ENCODE measurements at regions of chr5 and their contacts with region 1.

Region 1: GRCh38 chr5:31516802-31517201 is 15.1 kb downstream of the DROSHA start:
- DNase-seq: no peak
- H3K4me3 Mint-ChIP-seq: no peak overlapping the region
- H3K27ac Mint-ChIP-seq: no peak overlapping the region
- H3K4me1 Mint-ChIP-seq: peaks cover 6% of the 10 kb centered on the region
- H3K27me3 Mint-ChIP-seq: no peaks in the 10 kb centered on the region

Region 2: GRCh38 chr5:31531888-31532710 is 15.3 kb after region 1 on chr5 and contains the starts of genes C5orf22 and DROSHA:
- CTCF ChIA-PET with region 1: interaction called, 14 read pairs
- POLR2A ChIA-PET with region 1: no interaction called
- DNase-seq: peak; percentile 95
- H3K4me3 Mint-ChIP-seq: peak within 1 kb of the TSS; percentile 82
- H3K27ac Mint-ChIP-seq: peak within 1 kb of the TSS; percentile 94
- H3K4me1 Mint-ChIP-seq: peaks cover 50% of the 10 kb centered on the region
- H3K27me3 Mint-ChIP-seq: no peaks in the 10 kb centered on the region
- total RNA-seq, gene C5orf22: 25.2 to 32.6 TPM
- total RNA-seq, gene DROSHA: 76.7 to 80.7 TPM

Region 3: GRCh38 chr5:31598640-31599611 is 82.1 kb after region 1 on chr5:
- CTCF ChIA-PET with region 1: no interaction called
- POLR2A ChIA-PET with region 1: no interaction called
- DNase-seq: no peak
- H3K4me3 Mint-ChIP-seq: no peak overlapping the region
- H3K27ac Mint-ChIP-seq: no peak overlapping the region
- H3K4me1 Mint-ChIP-seq: no peaks in the 10 kb centered on the region
- H3K27me3 Mint-ChIP-seq: peaks cover 11% of the 10 kb centered on the region